H1 (cell line): ENCODE measurements at regions of chr13 and their contacts with region 1.

Region 1: DNA sequence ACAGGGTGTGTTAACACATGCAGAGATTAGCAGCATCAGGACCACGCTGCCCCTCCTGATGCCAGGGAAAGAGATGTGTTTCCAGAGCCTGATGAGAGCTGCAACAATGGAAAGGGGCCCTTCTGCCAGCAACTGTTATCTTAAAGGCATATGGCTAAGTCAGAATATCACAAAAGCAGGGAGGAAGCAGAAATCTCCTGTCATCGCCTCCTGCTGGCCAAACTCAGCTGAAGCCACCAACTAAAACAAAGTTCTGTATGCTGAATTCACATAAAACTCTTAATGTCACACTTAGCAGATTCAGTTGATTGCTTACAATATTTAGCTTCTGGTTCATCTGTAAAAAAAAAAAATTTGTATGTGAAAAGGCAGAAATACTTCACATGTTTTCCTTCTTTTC is 178.2 kb downstream of the GPC5 start:
- DNase-seq: peak; percentile 23 to 63
- H3K4me3 ChIP-seq: no peak overlapping the region
- H3K27ac ChIP-seq: no peak overlapping the region
- H3K4me1 ChIP-seq: no peaks in the 10 kb centered on the region
- H3K27me3 ChIP-seq: no peaks in the 10 kb centered on the region
- CTCF ChIP-seq: peak; percentile 32 to 78 (median 61)
- EP300 ChIP-seq: no peak
- POLR2A ChIP-seq: no peak
- RAD21 ChIP-seq: peak; percentile 54 to 66

Region 2: GRCh38 chr13:91375116-91375729 is 201.4 kb before region 1 on chr13:
- CTCF ChIA-PET with region 1: interaction called, 17 read pairs
- POLR2A ChIA-PET with region 1: no interaction called
- DNase-seq: no peak
- H3K4me3 ChIP-seq: no peak overlapping the region
- H3K27ac ChIP-seq: no peak overlapping the region
- H3K4me1 ChIP-seq: no peaks in the 10 kb centered on the region; a peak in 2 of 7 replicates
- H3K27me3 ChIP-seq: no peaks in the 10 kb centered on the region
- CTCF ChIP-seq: peak; percentile 40 to 67 (median 58)
- EP300 ChIP-seq: no peak
- POLR2A ChIP-seq: no peak
- RAD21 ChIP-seq: peak; percentile 66 to 71

Region 3: GRCh38 chr13:91557328-91558090 is 19.1 kb before region 1 on chr13:
- CTCF ChIA-PET with region 1: interaction called, 11 read pairs
- POLR2A ChIA-PET with region 1: no interaction called
- DNase-seq: no peak
- H3K4me3 ChIP-seq: no peak overlapping the region
- H3K27ac ChIP-seq: no peak overlapping the region
- H3K4me1 ChIP-seq: no peaks in the 10 kb centered on the region
- H3K27me3 ChIP-seq: peaks cover 0 to 3% (median 0%) of the 10 kb centered on the region in 4 experiments; a peak in 1 of 7 replicates
- CTCF ChIP-seq: no peak
- EP300 ChIP-seq: no peak
- POLR2A ChIP-seq: no peak
- RAD21 ChIP-seq: peak in 1 of 2 experiments; percentile 17; a peak in 1 of 4 replicates

Region 4: DNA sequence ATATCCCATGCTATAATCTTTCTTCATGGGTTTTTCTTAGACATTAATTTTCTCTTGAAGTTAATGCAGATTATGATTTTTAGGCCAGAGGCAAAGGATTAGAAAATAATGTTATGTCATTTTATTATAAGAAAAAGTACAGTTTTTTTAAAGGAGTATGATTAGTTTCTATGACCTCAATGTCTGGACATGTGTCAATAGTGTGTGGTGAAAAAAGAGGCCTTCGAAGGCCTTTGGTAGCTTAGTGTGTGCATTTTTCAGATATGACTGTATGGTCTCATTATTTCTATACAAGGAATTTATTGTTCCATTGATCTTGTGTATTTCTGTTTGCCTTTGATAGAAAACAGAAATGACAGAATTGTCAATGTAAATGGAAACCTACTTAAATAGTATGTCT is 17.5 kb after region 1 on chr13:
- CTCF ChIA-PET with region 1: interaction called, 11 read pairs
- POLR2A ChIA-PET with region 1: no interaction called
- DNase-seq: no peak
- H3K4me3 ChIP-seq: no peak overlapping the region
- H3K27ac ChIP-seq: no peak overlapping the region
- H3K4me1 ChIP-seq: no peaks in the 10 kb centered on the region
- H3K27me3 ChIP-seq: no peaks in the 10 kb centered on the region
- CTCF ChIP-seq: no peak
- EP300 ChIP-seq: no peak
- POLR2A ChIP-seq: no peak
- RAD21 ChIP-seq: no peak

Region 5: GRCh38 chr13:91618315-91618714 is 41.7 kb after region 1 on chr13:
- CTCF ChIA-PET with region 1: no interaction called
- POLR2A ChIA-PET with region 1: no interaction called
- DNase-seq: no peak
- H3K4me3 ChIP-seq: no peak overlapping the region
- H3K27ac ChIP-seq: no peak overlapping the region
- H3K4me1 ChIP-seq: no peaks in the 10 kb centered on the region
- H3K27me3 ChIP-seq: no peaks in the 10 kb centered on the region
- CTCF ChIP-seq: no peak
- EP300 ChIP-seq: no peak
- POLR2A ChIP-seq: no peak
- RAD21 ChIP-seq: no peak

Region 6: DNA sequence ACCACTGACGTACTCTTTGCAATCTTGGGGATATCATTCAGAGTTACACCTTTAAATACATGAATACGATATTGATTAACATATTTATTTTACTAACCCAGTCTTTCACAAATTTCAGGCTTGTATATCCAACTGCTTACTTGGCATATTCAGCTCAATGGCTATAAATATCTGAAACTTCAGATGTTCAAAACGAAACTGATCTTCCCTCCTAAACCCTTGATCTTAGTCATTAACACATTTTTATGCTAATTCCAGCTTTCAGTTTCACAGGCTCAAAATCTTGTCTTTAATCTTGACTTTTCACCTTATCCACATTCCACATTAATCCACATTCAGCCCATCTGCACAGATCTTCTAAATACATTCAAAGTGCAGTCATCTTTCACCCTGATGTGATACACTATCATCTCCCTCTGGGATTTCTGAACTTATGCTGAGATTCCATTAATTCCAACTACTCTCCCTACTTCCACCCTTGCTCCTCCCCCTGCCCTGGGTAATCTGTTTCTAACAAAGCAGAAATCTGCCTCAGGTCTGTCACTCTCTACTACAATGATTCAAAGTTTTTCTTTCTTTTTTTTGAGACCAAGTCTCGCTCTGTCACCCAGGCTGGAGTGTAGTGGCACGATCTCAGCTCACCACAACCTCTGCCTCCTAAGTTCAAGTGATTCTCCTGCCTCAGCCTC is 209.0 kb after region 1 on chr13:
- CTCF ChIA-PET with region 1: interaction called, 10 read pairs
- POLR2A ChIA-PET with region 1: no interaction called
- DNase-seq: no peak
- H3K4me3 ChIP-seq: no peak overlapping the region
- H3K27ac ChIP-seq: no peak overlapping the region
- H3K4me1 ChIP-seq: no peaks in the 10 kb centered on the region
- H3K27me3 ChIP-seq: no peaks in the 10 kb centered on the region
- CTCF ChIP-seq: no peak
- EP300 ChIP-seq: no peak
- POLR2A ChIP-seq: no peak
- RAD21 ChIP-seq: no peak